ENCODE measurements at regions of chr9 and their contacts with region 1.

Region 1: DNA sequence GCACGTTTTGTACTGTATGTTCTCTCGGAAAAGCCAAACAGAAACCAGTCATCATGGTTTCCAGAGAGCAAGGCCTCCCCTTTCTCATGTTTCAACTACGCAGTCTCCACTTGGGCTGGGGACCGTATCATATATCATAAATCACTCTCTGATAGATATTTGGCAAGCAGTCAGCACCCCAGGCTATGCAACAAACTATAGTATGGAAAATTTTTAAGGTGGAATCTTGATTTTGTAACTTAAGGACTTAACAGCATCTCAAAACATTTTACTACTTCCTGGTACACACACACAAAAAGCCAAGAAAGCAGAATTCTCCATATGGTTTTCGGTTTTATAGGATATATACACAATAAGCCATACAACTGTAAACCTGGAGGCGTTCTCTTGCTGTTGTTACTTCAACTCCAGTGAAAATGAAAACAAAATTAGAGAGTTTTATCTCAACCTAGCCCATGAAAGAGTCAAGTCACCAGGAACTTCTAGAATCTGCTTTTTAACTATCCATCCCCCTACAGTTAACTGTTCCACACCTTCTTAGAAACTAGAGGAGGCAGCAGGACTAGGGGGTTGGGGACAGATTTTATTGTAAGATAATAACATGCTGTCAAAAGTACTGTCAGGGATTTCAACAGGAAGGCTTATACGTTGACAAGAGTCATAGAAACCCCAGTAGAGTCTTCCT is 283.4 kb downstream of the NFIB start:
- DNase-seq: no peak
- ATAC-seq: peak in 6 of 8 donors; percentile 1 to 69 (median 36)
- H3K4me3 ChIP-seq: peak overlapping the region in 9 of 10 donors; percentile 16 to 44 (median 36)
- H3K27ac ChIP-seq: peak overlapping the region; percentile 68 to 94 (median 86)
- H3K4me1 ChIP-seq: peaks cover 15 to 65% (median 41%) of the 10 kb centered on the region in 9 donors
- H3K27me3 ChIP-seq: no peaks in the 10 kb centered on the region
- CTCF ChIP-seq: no peak

Region 2: DNA sequence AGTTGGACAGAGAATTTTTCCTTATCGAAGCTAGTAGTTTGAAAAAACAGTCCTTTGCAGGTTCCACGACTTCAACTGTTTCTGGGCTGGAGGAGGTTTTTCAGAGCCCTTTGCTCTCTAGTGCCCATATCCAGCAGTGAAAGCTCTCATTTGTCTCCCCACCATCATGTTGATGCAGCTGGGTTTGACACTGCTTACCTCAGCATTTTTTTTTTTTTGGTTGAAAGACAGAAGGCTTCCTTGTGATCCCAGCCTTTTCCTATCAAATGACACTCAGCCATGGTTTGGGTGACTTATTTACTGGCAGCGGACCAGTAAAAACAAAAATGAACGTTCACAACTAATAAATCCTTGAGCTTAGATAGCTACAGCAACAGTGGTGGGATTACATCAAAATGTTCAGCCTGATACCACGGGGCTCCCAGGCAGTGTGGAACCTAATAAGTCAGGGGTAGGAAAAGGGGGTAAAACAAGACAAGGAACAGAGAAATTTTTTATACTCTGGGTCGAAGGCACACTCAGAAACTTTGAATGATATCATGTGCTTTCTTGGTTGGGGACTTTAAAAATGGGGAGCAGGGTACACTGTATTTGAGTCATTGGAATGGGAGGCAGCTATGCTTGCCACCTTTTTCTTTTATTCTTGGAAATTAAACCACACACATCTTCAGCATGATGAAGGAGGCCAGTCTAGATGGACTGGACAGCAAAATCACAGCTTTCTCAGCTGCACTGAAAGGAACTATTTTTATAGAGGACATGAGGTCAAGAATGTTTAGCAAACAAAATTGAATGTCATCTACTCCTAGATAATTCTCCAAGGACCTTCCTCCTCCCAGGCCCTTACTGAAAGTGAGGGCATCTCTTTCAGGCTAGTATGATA is 442.1 kb before region 1 on chr9:
- intact Hi-C with region 1: loop called in 1 of 10 experiments (anchors 10 kb)
- DNase-seq: peak in 1 of 2 donors; percentile 48
- ATAC-seq: peak; percentile 50 to 82 (median 72)
- H3K4me3 ChIP-seq: no peak overlapping the region
- H3K27ac ChIP-seq: peak overlapping the region in 8 of 10 donors; percentile 16 to 80 (median 67)
- H3K4me1 ChIP-seq: peaks cover 6 to 56% (median 34%) of the 10 kb centered on the region in 9 donors
- H3K27me3 ChIP-seq: no peaks in the 10 kb centered on the region
- CTCF ChIP-seq: no peak

Region 3: GRCh38 chr9:13787234-13787833 is 243.2 kb before region 1 on chr9:
- intact Hi-C with region 1: loop called in 1 of 10 experiments (anchors 5 kb)
- DNase-seq: peak in 1 of 2 donors; percentile 82
- ATAC-seq: peak; percentile 84 to 95 (median 90)
- H3K4me3 ChIP-seq: peak overlapping the region in 8 of 10 donors; percentile 2 to 41 (median 26)
- H3K27ac ChIP-seq: peak overlapping the region; percentile 80 to 95 (median 87)
- H3K4me1 ChIP-seq: peaks cover 5 to 34% (median 26%) of the 10 kb centered on the region in 9 donors
- H3K27me3 ChIP-seq: no peaks in the 10 kb centered on the region
- CTCF ChIP-seq: no peak

Region 4: GRCh38 chr9:13898957-13899356 is 131.6 kb before region 1 on chr9:
- intact Hi-C with region 1: loop called in 2 of 10 experiments (anchors 1 to 5 kb)
- DNase-seq: peak in 1 of 2 donors; percentile 26
- ATAC-seq: no peak
- H3K4me3 ChIP-seq: no peak overlapping the region
- H3K27ac ChIP-seq: peak overlapping the region in 9 of 10 donors; percentile 37 to 86 (median 70)
- H3K4me1 ChIP-seq: peaks cover 0 to 64% (median 41%) of the 10 kb centered on the region in 9 donors
- H3K27me3 ChIP-seq: no peaks in the 10 kb centered on the region
- CTCF ChIP-seq: no peak

Region 5: DNA sequence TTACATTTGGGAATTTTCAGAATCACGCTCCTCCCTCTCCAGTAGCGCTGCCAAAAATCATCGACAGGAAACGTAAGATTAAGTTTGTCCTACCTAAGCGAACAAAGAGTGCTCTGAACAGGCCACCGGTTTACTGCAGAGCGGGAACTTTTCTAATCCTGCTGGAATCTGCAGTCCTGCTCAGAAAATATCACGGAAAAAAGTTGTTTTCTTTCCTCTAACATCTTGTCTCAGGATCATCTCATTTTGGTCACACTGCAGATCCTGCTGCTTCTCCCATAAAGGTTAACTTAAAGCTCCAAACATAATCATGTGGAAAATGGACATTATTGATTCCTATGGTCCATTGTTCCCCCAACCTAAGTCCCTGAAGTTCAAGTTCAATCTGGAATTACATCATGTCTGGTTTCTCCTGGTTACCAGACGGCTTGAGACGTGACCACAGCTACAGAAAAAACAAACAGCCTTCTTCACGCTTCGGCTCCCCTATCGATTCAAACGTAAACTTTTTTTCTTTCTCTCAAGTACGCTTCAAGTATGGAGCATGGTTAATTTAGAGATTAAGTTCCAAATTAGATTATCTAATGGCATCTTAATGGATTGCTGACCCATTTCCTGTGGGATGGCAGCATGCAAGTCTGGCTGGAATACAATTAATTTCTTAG is 65.9 kb after region 1 on chr9:
- intact Hi-C with region 1: loop called in 5 of 10 experiments (anchors 2 to 10 kb)
- DNase-seq: peak in 1 of 2 donors; percentile 63
- ATAC-seq: peak; percentile 56 to 93 (median 82)
- H3K4me3 ChIP-seq: peak overlapping the region in 8 of 10 donors; percentile 3 to 43 (median 29)
- H3K27ac ChIP-seq: peak overlapping the region; percentile 50 to 93 (median 81)
- H3K4me1 ChIP-seq: peaks cover 3 to 85% (median 55%) of the 10 kb centered on the region in 9 donors
- H3K27me3 ChIP-seq: no peaks in the 10 kb centered on the region
- CTCF ChIP-seq: no peak

Region 6: DNA sequence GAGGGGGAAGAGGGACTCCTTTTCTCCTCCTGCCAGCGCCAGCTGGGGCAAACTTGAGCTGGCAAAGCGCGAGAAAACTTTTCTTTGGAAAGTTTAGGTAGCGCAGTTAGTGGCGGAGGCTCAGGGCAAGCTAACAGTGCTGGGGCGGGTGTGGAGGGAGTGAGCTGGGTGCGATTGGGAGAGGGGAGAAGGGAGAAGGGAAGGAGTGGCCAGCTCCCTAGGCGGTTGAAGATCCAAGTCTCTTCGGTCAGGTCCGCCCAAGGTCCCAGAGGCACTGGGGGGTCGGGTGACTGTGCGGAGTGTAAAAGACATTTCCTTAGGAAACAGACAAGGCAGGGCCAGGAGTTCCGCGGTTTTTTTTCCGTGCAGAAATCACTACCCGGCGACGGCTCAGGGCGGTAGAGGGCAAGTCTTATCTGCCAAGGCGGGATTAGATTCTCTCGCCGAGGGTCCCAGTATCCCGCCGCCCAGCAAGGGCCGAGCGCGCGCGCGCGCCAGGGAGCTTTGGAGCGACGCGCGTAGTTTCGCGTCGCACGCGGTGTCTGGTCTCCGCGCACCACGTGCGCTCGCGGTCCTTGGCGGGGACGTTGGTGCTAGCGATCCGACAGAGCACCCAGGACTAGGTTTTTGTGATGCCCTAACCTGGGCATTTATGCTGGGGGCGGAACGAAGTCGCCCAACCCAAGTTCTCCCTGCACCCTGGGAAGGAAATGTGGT is 317.0 kb after region 1 on chr9:
- intact Hi-C with region 1: loop called in 1 of 10 experiments (anchors 2 kb)
- DNase-seq: peak; percentile 66 to 67
- ATAC-seq: peak; percentile 48 to 63 (median 55)
- H3K4me3 ChIP-seq: peak overlapping the region; percentile 42 to 83 (median 57)
- H3K27ac ChIP-seq: peak overlapping the region; percentile 80 to 98 (median 92)
- H3K4me1 ChIP-seq: peaks cover 6 to 84% (median 49%) of the 10 kb centered on the region in 9 donors
- H3K27me3 ChIP-seq: peaks cover 0 to 70% (median 0%) of the 10 kb centered on the region in 7 donors
- CTCF ChIP-seq: peak in 5 of 9 donors; percentile 10 to 56 (median 41)

Region 7: GRCh38 chr9:14395317-14396082 is 365.0 kb after region 1 on chr9:
- intact Hi-C with region 1: loop called in 1 of 10 experiments (anchors 5 kb)
- DNase-seq: peak; percentile 21 to 54
- ATAC-seq: peak; percentile 47 to 85 (median 77)
- H3K4me3 ChIP-seq: peak overlapping the region in 3 of 10 donors; percentile 7 to 38 (median 23)
- H3K27ac ChIP-seq: peak overlapping the region in 6 of 10 donors; percentile 7 to 56 (median 52)
- H3K4me1 ChIP-seq: peaks cover 0 to 21% (median 9%) of the 10 kb centered on the region in 9 donors
- H3K27me3 ChIP-seq: no peaks in the 10 kb centered on the region
- CTCF ChIP-seq: no peak

Region 8: DNA sequence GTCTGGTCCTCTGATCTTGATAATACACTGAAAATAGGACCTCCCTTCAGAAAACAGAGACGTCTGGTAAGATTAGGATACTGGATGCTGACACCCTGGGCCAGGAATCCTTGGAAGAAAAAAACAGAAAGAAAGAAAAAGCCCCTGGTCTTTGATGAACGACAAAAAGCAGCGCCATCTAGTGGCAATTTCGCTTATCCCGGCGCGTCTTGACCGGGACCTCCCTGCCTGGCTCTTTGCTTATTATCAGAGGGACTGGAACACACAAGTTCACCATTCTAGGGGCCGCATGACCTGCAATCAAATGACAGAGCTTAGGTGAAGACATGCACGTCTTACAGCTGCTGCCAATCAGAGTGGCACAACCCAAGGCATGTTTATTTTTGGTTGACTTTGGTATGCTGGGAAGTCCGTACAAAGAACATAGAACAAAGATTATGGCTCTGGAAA is 398.3 kb after region 1 on chr9:
- intact Hi-C with region 1: no loop called
- DNase-seq: peak; percentile 64 to 81
- ATAC-seq: peak; percentile 65 to 87 (median 76)
- H3K4me3 ChIP-seq: no peak overlapping the region
- H3K27ac ChIP-seq: peak overlapping the region in 5 of 10 donors; percentile 10 to 65 (median 29)
- H3K4me1 ChIP-seq: peaks cover 6 to 30% (median 14%) of the 10 kb centered on the region in 9 donors
- H3K27me3 ChIP-seq: no peaks in the 10 kb centered on the region
- CTCF ChIP-seq: peak; percentile 67 to 87 (median 82)

Region 9: DNA sequence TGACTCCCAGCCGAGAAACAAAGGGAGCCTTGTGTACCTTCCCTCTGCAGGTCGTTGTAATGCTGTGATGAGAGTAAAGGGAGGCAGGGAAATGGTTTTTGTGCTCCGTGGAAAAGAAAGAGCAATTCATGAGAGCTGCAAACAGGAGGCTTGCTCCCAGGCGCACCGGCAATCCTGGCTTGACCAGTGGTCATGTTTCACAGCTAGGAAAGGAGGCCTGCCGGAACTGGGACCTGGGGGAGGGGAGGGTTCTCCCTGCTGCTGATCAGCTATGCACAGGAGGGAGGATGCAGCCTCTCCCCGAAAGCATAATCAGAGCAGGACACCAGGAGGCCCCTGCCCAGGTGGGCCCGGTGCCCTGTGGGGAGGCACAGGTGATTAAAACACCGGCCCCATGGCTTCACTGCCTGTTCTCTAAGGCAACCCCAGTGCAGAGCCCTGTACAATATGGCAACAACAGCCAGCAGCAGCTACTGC is 531.5 kb after region 1 on chr9:
- intact Hi-C with region 1: no loop called
- DNase-seq: no peak
- ATAC-seq: no peak
- H3K4me3 ChIP-seq: no peak overlapping the region
- H3K27ac ChIP-seq: no peak overlapping the region
- H3K4me1 ChIP-seq: no peaks in the 10 kb centered on the region
- H3K27me3 ChIP-seq: no peaks in the 10 kb centered on the region
- CTCF ChIP-seq: no peak